Vagina (tissue), 2 donors: ENCODE measurements at regions of chr3 and their contacts with region 1.

Region 1: DNA sequence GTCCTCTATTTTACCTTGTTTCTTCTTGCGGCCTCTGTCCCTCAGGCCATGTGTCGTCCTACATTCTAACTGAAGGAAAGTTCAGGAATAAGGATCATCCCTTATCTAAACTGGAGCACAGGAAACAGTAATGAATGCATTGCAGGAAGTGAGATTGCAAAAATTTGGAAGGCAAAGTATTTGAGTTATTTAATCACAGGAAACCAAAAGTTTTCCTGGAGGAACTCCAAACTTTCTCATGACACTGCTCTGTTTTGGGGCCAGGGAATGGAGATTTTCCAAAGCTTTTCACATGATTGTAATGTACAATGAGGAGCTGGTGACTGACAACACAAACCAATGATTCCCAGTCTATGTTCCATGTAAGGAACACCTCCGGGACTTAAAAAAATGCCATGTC is 57.8 kb upstream of the PLSCR4 start:
- DNase-seq: no peak
- H3K4me3 ChIP-seq: no peak overlapping the region
- H3K27ac ChIP-seq: no peak overlapping the region
- H3K4me1 ChIP-seq: peaks cover under 1% of the 10 kb centered on the region
- H3K27me3 ChIP-seq: no peaks in the 10 kb centered on the region
- CTCF ChIP-seq: no peak
- POLR2A ChIP-seq: no peak

Region 2: GRCh38 chr3:144900366-144900765 is 1408.3 kb before region 1 on chr3:
- intact Hi-C with region 1: no loop called
- DNase-seq: no peak
- H3K4me3 ChIP-seq: no peak overlapping the region
- H3K27ac ChIP-seq: no peak overlapping the region
- H3K4me1 ChIP-seq: no peaks in the 10 kb centered on the region
- H3K27me3 ChIP-seq: no peaks in the 10 kb centered on the region
- CTCF ChIP-seq: no peak
- POLR2A ChIP-seq: no peak

Region 3: GRCh38 chr3:146250449-146251382 is 58.0 kb before region 1 on chr3 and contains the start of gene PLSCR4:
- intact Hi-C with region 1: loop called (anchors 5 kb)
- DNase-seq: no peak
- H3K4me3 ChIP-seq: peak within 1 kb of the TSS; percentile 63 to 90
- H3K27ac ChIP-seq: peak within 1 kb of the TSS; percentile 97
- H3K4me1 ChIP-seq: peaks cover 49% of the 10 kb centered on the region
- H3K27me3 ChIP-seq: no peaks in the 10 kb centered on the region
- CTCF ChIP-seq: no peak
- POLR2A ChIP-seq: peak in 1 of 2 donors; percentile 2
- total RNA-seq, gene PLSCR4: 50.3 TPM

Region 4: DNA sequence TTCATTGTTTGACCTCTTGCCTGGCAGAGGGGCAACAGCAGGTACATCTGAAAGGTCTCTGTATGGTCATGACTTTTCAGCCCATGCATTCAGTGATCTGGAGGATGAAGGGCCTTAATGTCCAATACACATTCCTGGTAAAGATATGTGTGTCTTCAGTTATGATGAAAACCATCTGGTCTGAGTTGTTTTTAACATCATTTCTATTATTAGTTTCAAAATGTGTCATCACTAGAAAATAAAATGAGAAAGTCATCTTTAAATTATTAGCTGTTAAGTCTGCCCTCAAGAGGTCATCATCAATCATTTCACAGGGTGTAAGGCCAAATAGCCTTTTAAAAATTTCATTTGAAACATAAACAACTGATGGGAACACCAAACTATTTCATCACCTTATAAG is 34.3 kb after region 1 on chr3:
- intact Hi-C with region 1: no loop called
- DNase-seq: no peak
- H3K4me3 ChIP-seq: no peak overlapping the region
- H3K27ac ChIP-seq: no peak overlapping the region
- H3K4me1 ChIP-seq: no peaks in the 10 kb centered on the region
- H3K27me3 ChIP-seq: no peaks in the 10 kb centered on the region
- CTCF ChIP-seq: no peak
- POLR2A ChIP-seq: no peak